Naive thymus-derived CD8-positive, alpha-beta T cell (primary cell): ENCODE measurements at regions of chr1 and their contacts with region 1.

Region 1: GRCh38 chr1:225911191-225912130 is 12.6 kb downstream of the PYCR2 start:
- DNase-seq: peak; percentile 51 to 85 (median 76)
- ATAC-seq: peak; percentile 94 to 96
- H3K4me3 Mint-ChIP-seq: peak overlapping the region in 5 of 10 donors; percentile 14 to 62 (median 25)
- H3K27ac Mint-ChIP-seq: peak overlapping the region in 9 of 10 donors; percentile 19 to 84 (median 73)
- H3K4me1 Mint-ChIP-seq: peaks cover 25 to 56% (median 39%) of the 10 kb centered on the region in 4 donors
- H3K27me3 Mint-ChIP-seq: no peaks in the 10 kb centered on the region

Region 2: GRCh38 chr1:225866061-225866837 is 45.2 kb before region 1 on chr1:
- POLR2A ChIA-PET with region 1: interaction called, 11 read pairs
- DNase-seq: peak; percentile 36 to 87 (median 76)
- ATAC-seq: peak; percentile 89 to 94
- H3K4me3 Mint-ChIP-seq: peak overlapping the region; percentile 53 to 82 (median 74)
- H3K27ac Mint-ChIP-seq: peak overlapping the region; percentile 82 to 95 (median 90)
- H3K4me1 Mint-ChIP-seq: peaks cover 22 to 56% (median 44%) of the 10 kb centered on the region in 4 donors
- H3K27me3 Mint-ChIP-seq: no peaks in the 10 kb centered on the region

Region 3: GRCh38 chr1:225933072-225933471 is 21.6 kb after region 1 on chr1:
- POLR2A ChIA-PET with region 1: no interaction called
- DNase-seq: no peak
- ATAC-seq: no peak
- H3K4me3 Mint-ChIP-seq: no peak overlapping the region
- H3K27ac Mint-ChIP-seq: no peak overlapping the region
- H3K4me1 Mint-ChIP-seq: peaks cover 12 to 26% (median 20%) of the 10 kb centered on the region in 4 donors
- H3K27me3 Mint-ChIP-seq: no peaks in the 10 kb centered on the region